ENCODE measurements at regions of chr1 and their contacts with region 1.

Region 1: DNA sequence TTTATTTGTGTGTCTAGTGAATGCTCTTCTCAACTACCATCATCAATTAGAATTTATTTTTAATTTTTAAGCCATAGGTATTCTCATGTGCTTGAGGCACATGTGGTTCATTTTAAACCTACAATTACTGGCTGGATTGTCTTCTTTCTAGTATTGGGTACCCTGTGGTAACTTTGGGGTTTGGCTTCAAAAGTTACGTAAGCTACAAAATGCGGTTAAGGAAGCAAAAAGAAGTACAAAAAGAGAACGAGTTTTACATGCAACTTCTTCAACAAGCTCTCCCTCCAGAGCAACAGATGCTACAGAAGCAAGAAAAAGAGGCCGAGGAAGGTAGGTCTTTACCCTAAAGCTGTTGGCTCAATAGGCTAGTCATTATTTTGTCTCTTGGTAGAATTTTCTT is 25.8 kb downstream of the MACO1 start:
- DNase-seq: no peak
- ATAC-seq: no peak
- H3K4me3 ChIP-seq: no peak overlapping the region
- H3K4me3 Mint-ChIP-seq: no peak overlapping the region
- H3K27ac ChIP-seq: no peak overlapping the region
- H3K27ac Mint-ChIP-seq: no peak overlapping the region
- H3K4me1 ChIP-seq: no peaks in the 10 kb centered on the region
- H3K4me1 Mint-ChIP-seq: no peaks in the 10 kb centered on the region
- H3K27me3 ChIP-seq: no peaks in the 10 kb centered on the region
- H3K27me3 Mint-ChIP-seq: no peaks in the 10 kb centered on the region
- CTCF ChIP-seq: no peak

Region 2: GRCh38 chr1:24688621-24689195 is 767.8 kb before region 1 on chr1:
- CTCF ChIA-PET with region 1: no interaction called
- POLR2A ChIA-PET with region 1: no interaction called
- intact Hi-C with region 1: no loop called
- DNase-seq: peak; percentile 26 to 76 (median 49)
- ATAC-seq: peak; percentile 65
- H3K4me3 ChIP-seq: no peak overlapping the region
- H3K4me3 Mint-ChIP-seq: no peak overlapping the region
- H3K27ac ChIP-seq: no peak overlapping the region
- H3K27ac Mint-ChIP-seq: no peak overlapping the region
- H3K4me1 ChIP-seq: no peaks in the 10 kb centered on the region
- H3K4me1 Mint-ChIP-seq: no peaks in the 10 kb centered on the region
- H3K27me3 ChIP-seq: no peaks in the 10 kb centered on the region
- H3K27me3 Mint-ChIP-seq: no peaks in the 10 kb centered on the region
- CTCF ChIP-seq: peak; percentile 87

Region 3: GRCh38 chr1:25442178-25442577 is 14.3 kb before region 1 on chr1:
- CTCF ChIA-PET with region 1: no interaction called
- POLR2A ChIA-PET with region 1: no interaction called
- intact Hi-C with region 1: no loop called
- DNase-seq: no peak
- ATAC-seq: no peak
- H3K4me3 ChIP-seq: no peak overlapping the region
- H3K4me3 Mint-ChIP-seq: no peak overlapping the region
- H3K27ac ChIP-seq: no peak overlapping the region
- H3K27ac Mint-ChIP-seq: no peak overlapping the region
- H3K4me1 ChIP-seq: peaks cover 3% of the 10 kb centered on the region
- H3K4me1 Mint-ChIP-seq: peaks cover 57% of the 10 kb centered on the region
- H3K27me3 ChIP-seq: no peaks in the 10 kb centered on the region
- H3K27me3 Mint-ChIP-seq: no peaks in the 10 kb centered on the region
- CTCF ChIP-seq: no peak

Region 4: DNA sequence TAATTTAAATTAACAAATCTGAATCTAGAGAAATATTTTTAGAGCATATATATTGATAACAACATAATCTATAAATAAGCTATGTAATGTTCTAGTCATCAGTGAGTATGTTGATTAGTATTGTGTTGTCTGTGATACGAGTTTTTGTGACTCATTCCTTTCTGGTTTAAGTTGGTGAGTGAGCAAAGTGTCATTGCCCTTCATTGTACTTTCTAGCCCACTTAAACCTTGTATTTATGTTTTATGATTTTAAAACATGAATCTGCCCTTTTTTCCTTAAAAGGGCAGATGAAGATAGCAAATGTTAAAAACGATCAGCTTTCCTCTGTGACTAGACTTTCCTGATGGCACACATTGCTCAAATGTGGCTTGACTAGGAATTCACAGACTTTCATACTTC is 12.7 kb after region 1 on chr1:
- CTCF ChIA-PET with region 1: interaction called, 10 read pairs
- POLR2A ChIA-PET with region 1: interaction called, 3 read pairs
- intact Hi-C with region 1: no loop called
- DNase-seq: no peak
- ATAC-seq: no peak
- H3K4me3 ChIP-seq: no peak overlapping the region
- H3K4me3 Mint-ChIP-seq: no peak overlapping the region
- H3K27ac ChIP-seq: no peak overlapping the region
- H3K27ac Mint-ChIP-seq: no peak overlapping the region
- H3K4me1 ChIP-seq: peaks cover 11% of the 10 kb centered on the region
- H3K4me1 Mint-ChIP-seq: peaks cover 61% of the 10 kb centered on the region
- H3K27me3 ChIP-seq: no peaks in the 10 kb centered on the region
- H3K27me3 Mint-ChIP-seq: no peaks in the 10 kb centered on the region
- CTCF ChIP-seq: no peak

Region 5: GRCh38 chr1:25895365-25895993 is 439.0 kb after region 1 on chr1:
- CTCF ChIA-PET with region 1: no interaction called
- POLR2A ChIA-PET with region 1: no interaction called
- intact Hi-C with region 1: no loop called
- DNase-seq: peak; percentile 86 to 96 (median 88)
- ATAC-seq: peak; percentile 100
- H3K4me3 ChIP-seq: no peak overlapping the region
- H3K4me3 Mint-ChIP-seq: no peak overlapping the region
- H3K27ac ChIP-seq: no peak overlapping the region
- H3K27ac Mint-ChIP-seq: peak overlapping the region; percentile 24
- H3K4me1 ChIP-seq: peaks cover 10% of the 10 kb centered on the region
- H3K4me1 Mint-ChIP-seq: peaks cover 9% of the 10 kb centered on the region
- H3K27me3 ChIP-seq: no peaks in the 10 kb centered on the region
- H3K27me3 Mint-ChIP-seq: no peaks in the 10 kb centered on the region
- CTCF ChIP-seq: peak; percentile 98

Measured in CD4-positive, alpha-beta T cell (primary cell).